CD4-positive, alpha-beta T cell (primary cell): ENCODE measurements at regions of chr1 and their contacts with region 1.

Region 1: GRCh38 chr1:154558575-154559465 is at the start of gene UBE2Q1:
- DNase-seq: peak; percentile 99 to 100 (median 99)
- ATAC-seq: peak; percentile 87
- H3K4me3 ChIP-seq: peak within 1 kb of the TSS; percentile 87
- H3K4me3 Mint-ChIP-seq: peak within 1 kb of the TSS; percentile 91
- H3K27ac ChIP-seq: peak within 1 kb of the TSS; percentile 64 to 84
- H3K27ac Mint-ChIP-seq: peak within 1 kb of the TSS; percentile 83
- H3K4me1 ChIP-seq: peaks cover 46% of the 10 kb centered on the region
- H3K4me1 Mint-ChIP-seq: peaks cover 42% of the 10 kb centered on the region
- H3K27me3 ChIP-seq: no peaks in the 10 kb centered on the region
- H3K27me3 Mint-ChIP-seq: no peaks in the 10 kb centered on the region
- CTCF ChIP-seq: no peak
- total RNA-seq, gene UBE2Q1: 78.7 to 82.3 TPM

Region 2: GRCh38 chr1:153805042-153805745 is 753.6 kb before region 1 on chr1:
- CTCF ChIA-PET with region 1: no interaction called
- POLR2A ChIA-PET with region 1: no interaction called
- intact Hi-C with region 1: no loop called
- DNase-seq: peak in 13 of 14 experiments; percentile 21 to 93 (median 49)
- ATAC-seq: peak; percentile 98
- H3K4me3 ChIP-seq: no peak overlapping the region
- H3K4me3 Mint-ChIP-seq: peak overlapping the region; percentile 22
- H3K27ac ChIP-seq: peak overlapping the region; percentile 61 to 62
- H3K27ac Mint-ChIP-seq: peak overlapping the region; percentile 86
- H3K4me1 ChIP-seq: peaks cover 21% of the 10 kb centered on the region
- H3K4me1 Mint-ChIP-seq: peaks cover 42% of the 10 kb centered on the region
- H3K27me3 ChIP-seq: no peaks in the 10 kb centered on the region
- H3K27me3 Mint-ChIP-seq: no peaks in the 10 kb centered on the region
- CTCF ChIP-seq: no peak

Region 3: GRCh38 chr1:154220071-154220969 is 338.5 kb before region 1 on chr1 and contains the start of gene UBAP2L:
- CTCF ChIA-PET with region 1: no interaction called
- POLR2A ChIA-PET with region 1: interaction called, 4 read pairs
- intact Hi-C with region 1: loop called in 1 of 2 experiments (anchors 1 kb)
- DNase-seq: peak; percentile 97 to 100 (median 99)
- ATAC-seq: peak; percentile 83
- H3K4me3 ChIP-seq: peak within 1 kb of the TSS; percentile 95
- H3K4me3 Mint-ChIP-seq: peak within 1 kb of the TSS; percentile 91
- H3K27ac ChIP-seq: peak within 1 kb of the TSS; percentile 99
- H3K27ac Mint-ChIP-seq: peak within 1 kb of the TSS; percentile 93
- H3K4me1 ChIP-seq: peaks cover 43% of the 10 kb centered on the region
- H3K4me1 Mint-ChIP-seq: peaks cover 74% of the 10 kb centered on the region
- H3K27me3 ChIP-seq: no peaks in the 10 kb centered on the region
- H3K27me3 Mint-ChIP-seq: no peaks in the 10 kb centered on the region
- CTCF ChIP-seq: no peak
- total RNA-seq, gene UBAP2L: 224 to 234 TPM

Region 4: DNA sequence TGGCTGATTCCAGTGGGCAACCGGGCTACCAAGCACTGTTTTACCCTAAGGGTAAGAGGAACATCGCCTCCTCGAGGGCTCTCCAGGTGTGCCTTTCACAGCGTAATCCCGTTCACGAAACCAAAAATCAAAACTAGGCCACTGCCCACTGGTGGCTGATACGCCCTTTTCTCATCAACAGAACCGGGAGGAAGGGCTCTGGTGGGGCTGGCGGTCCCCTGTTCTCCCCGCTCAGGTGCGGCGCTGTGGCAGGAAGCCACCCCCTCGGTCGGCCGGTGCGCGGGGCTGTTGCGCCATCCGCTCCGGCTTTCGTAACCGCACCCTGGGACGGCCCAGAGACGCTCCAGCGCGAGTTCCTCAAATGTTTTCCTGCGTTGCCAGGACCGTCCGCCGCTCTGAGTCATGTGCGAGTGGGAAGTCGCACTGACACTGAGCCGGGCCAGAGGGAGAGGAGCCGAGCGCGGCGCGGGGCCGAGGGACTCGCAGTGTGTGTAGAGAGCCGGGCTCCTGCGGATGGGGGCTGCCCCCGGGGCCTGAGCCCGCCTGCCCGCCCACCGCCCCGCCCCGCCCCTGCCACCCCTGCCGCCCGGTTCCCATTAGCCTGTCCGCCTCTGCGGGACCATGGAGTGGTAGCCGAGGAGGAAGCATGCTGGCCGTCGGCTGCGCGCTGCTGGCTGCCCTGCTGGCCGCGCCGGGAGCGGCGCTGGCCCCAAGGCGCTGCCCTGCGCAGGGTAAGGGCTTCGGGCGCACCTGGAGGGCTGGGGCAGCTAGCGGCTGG is 153.6 kb before region 1 on chr1 and contains the start of gene IL6R:
- CTCF ChIA-PET with region 1: interaction called, 3 read pairs
- POLR2A ChIA-PET with region 1: no interaction called
- intact Hi-C with region 1: loop called (anchors 2 to 5 kb)
- DNase-seq: peak; percentile 57 to 91 (median 76)
- ATAC-seq: peak; percentile 65
- H3K4me3 ChIP-seq: peak within 1 kb of the TSS; percentile 89
- H3K4me3 Mint-ChIP-seq: peak within 1 kb of the TSS; percentile 96
- H3K27ac ChIP-seq: peak within 1 kb of the TSS; percentile 81 to 92
- H3K27ac Mint-ChIP-seq: peak within 1 kb of the TSS; percentile 95
- H3K4me1 ChIP-seq: peaks cover 88% of the 10 kb centered on the region
- H3K4me1 Mint-ChIP-seq: peaks cover 84% of the 10 kb centered on the region
- H3K27me3 ChIP-seq: no peaks in the 10 kb centered on the region
- H3K27me3 Mint-ChIP-seq: no peaks in the 10 kb centered on the region
- CTCF ChIP-seq: peak; percentile 73
- total RNA-seq, gene IL6R: 31.7 to 35.0 TPM

Region 5: DNA sequence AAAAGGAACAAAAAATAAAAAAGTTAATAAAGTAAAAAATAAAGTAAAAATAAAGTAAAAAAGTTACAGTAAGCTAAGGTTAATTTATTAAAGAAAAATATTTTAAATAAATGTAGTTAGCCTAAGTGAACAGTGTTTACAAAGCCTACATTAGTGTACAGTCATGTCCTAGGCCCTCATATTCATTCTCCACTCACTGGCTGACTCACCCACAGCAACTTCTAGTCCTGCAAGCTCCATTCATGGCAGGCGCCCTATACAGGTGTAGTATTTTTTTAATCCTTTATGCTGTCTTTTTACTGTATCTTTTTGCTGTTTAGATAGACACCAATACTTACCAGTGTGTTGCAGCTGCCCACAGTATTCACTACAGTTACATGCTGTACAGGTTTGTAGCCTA is 36.8 kb after region 1 on chr1:
- CTCF ChIA-PET with region 1: no interaction called
- POLR2A ChIA-PET with region 1: no interaction called
- intact Hi-C with region 1: no loop called
- DNase-seq: no peak
- ATAC-seq: no peak
- H3K4me3 ChIP-seq: no peak overlapping the region
- H3K4me3 Mint-ChIP-seq: no peak overlapping the region
- H3K27ac ChIP-seq: no peak overlapping the region
- H3K27ac Mint-ChIP-seq: no peak overlapping the region
- H3K4me1 ChIP-seq: peaks cover 11% of the 10 kb centered on the region
- H3K4me1 Mint-ChIP-seq: peaks cover 22% of the 10 kb centered on the region
- H3K27me3 ChIP-seq: no peaks in the 10 kb centered on the region
- H3K27me3 Mint-ChIP-seq: no peaks in the 10 kb centered on the region
- CTCF ChIP-seq: no peak

Region 6: DNA sequence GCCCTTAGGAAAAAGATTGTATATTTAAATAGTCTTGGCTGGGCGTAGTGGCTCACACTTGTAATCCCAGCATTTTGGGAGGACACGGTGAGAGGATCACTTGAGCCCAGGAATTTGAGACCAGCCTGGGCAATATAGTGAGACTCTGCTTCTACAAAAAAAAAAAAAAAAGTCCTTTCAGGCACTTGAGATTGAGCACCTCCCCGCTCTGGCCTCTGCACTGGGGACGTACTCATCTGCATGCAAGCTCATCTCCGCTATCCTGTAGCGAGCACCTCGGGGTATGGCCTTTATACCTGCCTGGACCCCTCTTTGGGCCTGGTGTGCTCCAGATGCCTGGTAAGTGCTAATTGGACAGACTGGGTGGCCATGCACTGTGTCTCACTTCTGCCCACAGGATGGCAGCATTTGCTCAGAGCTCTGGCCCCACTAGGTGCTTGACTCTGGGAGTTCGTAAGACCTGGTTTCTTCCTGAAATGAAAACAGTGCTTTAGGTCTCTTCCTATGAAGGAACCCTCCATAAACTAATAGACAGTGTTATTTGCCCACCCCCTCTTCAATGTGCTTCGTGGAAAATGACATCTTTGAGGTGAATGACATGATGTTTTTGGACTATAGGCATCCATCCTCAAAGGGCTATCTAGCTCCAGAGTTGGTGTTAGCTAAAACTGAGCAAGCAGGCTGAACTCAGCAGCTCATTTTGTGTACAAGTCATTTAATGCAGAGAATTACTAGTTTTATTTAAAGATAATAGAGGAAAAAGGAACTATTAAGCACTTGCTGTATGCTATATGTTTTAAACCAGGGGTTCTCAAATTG is 110.9 kb after region 1 on chr1:
- CTCF ChIA-PET with region 1: interaction called, 4 read pairs
- POLR2A ChIA-PET with region 1: no interaction called
- intact Hi-C with region 1: loop called (anchors 1 to 5 kb)
- DNase-seq: peak; percentile 61 to 88 (median 70)
- ATAC-seq: peak; percentile 100
- H3K4me3 ChIP-seq: no peak overlapping the region
- H3K4me3 Mint-ChIP-seq: no peak overlapping the region
- H3K27ac ChIP-seq: no peak overlapping the region
- H3K27ac Mint-ChIP-seq: no peak overlapping the region
- H3K4me1 ChIP-seq: no peaks in the 10 kb centered on the region
- H3K4me1 Mint-ChIP-seq: peaks cover 5% of the 10 kb centered on the region
- H3K27me3 ChIP-seq: no peaks in the 10 kb centered on the region
- H3K27me3 Mint-ChIP-seq: no peaks in the 10 kb centered on the region
- CTCF ChIP-seq: peak; percentile 83

Region 7: DNA sequence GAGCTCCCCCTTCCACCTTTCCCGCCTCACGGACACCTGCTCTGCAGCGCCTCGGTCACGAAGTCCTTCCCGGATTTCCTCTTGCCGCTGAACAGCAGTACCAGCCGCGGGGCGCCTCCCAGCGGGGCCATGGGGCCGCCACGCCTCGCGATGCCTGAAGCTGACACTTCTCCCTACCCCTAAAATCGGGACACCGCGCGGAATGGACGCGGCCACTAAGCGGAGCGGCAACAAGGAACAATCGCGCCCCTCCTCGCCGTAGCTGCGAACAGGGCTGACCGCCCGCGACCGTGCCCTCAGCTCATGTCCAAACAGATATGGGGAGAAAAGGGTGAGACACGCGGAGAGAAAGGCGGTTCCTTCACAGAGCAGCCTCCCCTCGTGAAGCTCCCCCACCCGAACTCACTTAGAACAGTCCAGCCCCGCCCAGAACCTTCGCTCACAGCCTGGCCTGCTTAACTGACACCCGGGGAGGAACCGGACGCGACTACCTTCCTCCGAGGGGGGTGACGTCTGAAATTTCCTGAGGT is 377.8 kb after region 1 on chr1 and contains the start of gene PMVK:
- CTCF ChIA-PET with region 1: interaction called, 4 read pairs
- POLR2A ChIA-PET with region 1: interaction called, 4 read pairs
- intact Hi-C with region 1: loop called (anchors 1 to 2 kb)
- DNase-seq: peak; percentile 90 to 98 (median 94)
- ATAC-seq: peak; percentile 79
- H3K4me3 ChIP-seq: peak within 1 kb of the TSS; percentile 86
- H3K4me3 Mint-ChIP-seq: peak within 1 kb of the TSS; percentile 90
- H3K27ac ChIP-seq: peak within 1 kb of the TSS; percentile 98 to 100
- H3K27ac Mint-ChIP-seq: peak within 1 kb of the TSS; percentile 98
- H3K4me1 ChIP-seq: peaks cover 58% of the 10 kb centered on the region
- H3K4me1 Mint-ChIP-seq: peaks cover 59% of the 10 kb centered on the region
- H3K27me3 ChIP-seq: no peaks in the 10 kb centered on the region
- H3K27me3 Mint-ChIP-seq: no peaks in the 10 kb centered on the region
- CTCF ChIP-seq: peak; percentile 51
- total RNA-seq, gene PMVK: 6.6 to 7.4 TPM